Dendritic cell treated with granulocyte-macrophage colony-stimulating factor and Interleukin-4, amounts not matched to agents 40 ng/mL and 50 ng/mL, for 4 days (primary cell): ENCODE measurements at regions of chr1 and their contacts with region 1.

Region 1: DNA sequence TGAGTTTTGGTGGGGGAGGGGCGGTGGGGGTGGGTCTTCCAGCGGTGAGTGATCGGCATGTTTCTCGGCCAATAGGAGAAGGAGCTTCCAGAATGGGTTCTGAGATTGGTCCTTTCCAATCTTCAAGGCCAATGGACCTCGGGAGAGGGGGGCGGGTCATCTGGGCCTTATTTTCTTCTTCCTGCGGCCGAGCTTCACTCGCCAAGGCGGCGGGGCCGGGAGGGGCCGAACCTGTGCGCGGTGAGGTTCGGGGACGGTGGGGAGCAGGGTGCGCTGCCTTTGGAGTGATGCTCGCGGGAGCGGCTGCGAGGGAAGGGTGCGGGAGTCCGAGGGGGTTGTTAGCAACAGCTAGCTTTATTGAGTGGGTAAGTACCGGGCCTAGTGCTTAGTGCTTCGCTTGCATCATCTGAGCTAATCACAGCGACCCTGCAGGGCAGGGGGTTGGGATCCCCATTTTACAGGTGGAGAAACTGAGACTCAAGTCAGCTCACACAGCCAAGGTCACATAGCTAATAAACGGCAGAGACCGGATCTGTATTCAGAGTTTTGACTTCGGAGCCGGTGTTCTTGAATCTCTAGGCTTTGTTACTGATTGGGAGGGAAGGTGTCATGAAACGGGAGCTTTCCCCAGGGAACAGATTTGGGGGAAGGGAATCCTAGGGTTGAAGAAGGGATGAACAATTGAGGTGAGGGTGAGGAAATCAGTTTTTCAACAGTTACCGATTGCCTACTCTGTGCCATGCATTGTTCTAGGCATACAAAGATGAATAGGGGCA is 549 bp downstream of the KDM4A start:
- H3K4me3 Mint-ChIP-seq: peak overlapping the region; percentile 82
- H3K27ac Mint-ChIP-seq: peak overlapping the region; percentile 94
- H3K4me1 Mint-ChIP-seq: peaks cover 40% of the 10 kb centered on the region
- H3K27me3 Mint-ChIP-seq: no peaks in the 10 kb centered on the region

Region 2: GRCh38 chr1:43227143-43227764 is 423.2 kb before region 1 on chr1:
- intact Hi-C with region 1: loop called (anchors 10 kb)
- H3K4me3 Mint-ChIP-seq: no peak overlapping the region
- H3K27ac Mint-ChIP-seq: no peak overlapping the region
- H3K4me1 Mint-ChIP-seq: peaks cover 34% of the 10 kb centered on the region
- H3K27me3 Mint-ChIP-seq: peaks cover 5% of the 10 kb centered on the region

Region 3: DNA sequence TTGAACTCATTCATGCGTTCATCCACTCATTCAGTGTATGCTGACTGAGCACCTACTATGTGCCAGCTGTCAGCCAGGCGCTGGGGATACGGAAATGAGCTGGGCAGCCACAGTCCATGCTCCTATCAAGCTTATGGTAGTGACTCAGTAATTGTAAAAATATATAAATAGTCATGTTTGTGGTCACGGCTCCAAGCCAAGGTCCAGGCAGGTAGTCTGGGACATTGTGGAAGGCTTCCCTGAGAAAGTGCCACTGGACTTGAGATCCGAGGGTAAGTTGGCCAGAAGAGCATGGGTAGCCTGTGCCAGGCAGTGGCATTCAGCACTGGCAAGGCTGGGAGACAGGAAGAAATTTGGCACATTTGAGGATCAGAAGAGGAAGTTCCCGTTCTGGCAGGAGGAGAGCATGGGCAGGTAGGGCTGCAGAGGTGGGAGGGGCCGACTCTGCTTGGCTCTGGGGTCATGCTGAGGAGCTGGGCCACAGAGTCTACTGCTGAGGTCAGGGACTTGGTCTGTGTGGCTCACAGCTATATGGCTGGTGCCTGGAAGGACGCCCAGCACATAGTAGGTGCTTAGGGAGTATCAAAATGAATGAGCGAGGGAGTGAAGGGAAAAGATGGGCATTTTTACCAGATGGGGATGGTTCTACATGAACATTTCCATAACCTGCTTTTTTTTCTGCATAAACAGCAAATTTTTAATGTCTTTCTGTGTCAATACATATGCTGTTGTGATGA is 112.9 kb before region 1 on chr1:
- intact Hi-C with region 1: no loop called
- H3K4me3 Mint-ChIP-seq: no peak overlapping the region
- H3K27ac Mint-ChIP-seq: no peak overlapping the region
- H3K4me1 Mint-ChIP-seq: no peaks in the 10 kb centered on the region
- H3K27me3 Mint-ChIP-seq: peaks cover 19% of the 10 kb centered on the region

Region 4: GRCh38 chr1:43622471-43622870 is 28.0 kb before region 1 on chr1:
- intact Hi-C with region 1: no loop called
- H3K4me3 Mint-ChIP-seq: no peak overlapping the region
- H3K27ac Mint-ChIP-seq: no peak overlapping the region
- H3K4me1 Mint-ChIP-seq: no peaks in the 10 kb centered on the region
- H3K27me3 Mint-ChIP-seq: no peaks in the 10 kb centered on the region

Region 5: DNA sequence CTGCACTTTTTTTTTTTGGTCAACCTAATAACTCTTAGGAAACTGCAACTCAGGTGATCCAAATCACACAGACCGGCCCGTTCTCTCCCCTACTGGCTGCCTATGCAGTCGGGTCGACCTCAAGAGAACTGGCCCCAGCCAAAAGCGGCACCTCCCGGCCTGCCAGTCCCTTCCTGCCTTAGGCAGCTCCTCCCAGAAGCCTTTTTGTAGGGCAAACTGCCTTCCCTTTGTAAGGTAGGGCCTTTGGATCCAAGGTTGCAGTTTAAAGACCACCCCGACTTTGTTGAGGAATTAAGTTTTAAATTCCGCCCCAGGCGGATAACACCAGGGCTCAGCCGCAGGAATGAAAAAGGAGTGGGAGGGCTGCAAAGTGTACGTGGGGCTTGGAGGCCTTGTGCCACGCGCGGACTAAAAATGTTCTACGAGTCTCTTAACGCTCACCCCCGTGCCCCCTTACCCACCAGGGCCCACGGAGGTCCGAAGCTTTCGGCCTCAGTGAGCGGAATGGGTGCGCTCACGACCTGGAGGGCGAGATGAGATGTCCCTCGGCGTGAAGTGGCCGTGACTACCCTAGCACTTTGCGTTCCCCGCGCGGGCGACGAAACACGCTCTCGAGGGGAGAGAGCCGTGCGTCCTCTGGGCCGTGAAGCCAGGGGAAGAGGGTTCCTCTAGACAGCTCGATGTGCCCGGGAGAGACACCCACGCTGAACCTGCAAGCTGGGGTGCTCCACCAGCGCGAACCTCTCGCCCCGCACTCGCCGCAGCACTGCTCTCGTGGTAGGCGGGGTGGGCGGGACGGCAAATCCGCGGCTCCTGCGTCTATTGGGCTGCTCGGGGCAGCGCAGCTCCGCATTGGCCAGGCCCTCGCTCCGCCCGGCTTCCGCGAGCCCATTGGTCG is 56.3 kb after region 1 on chr1:
- intact Hi-C with region 1: loop called (anchors 2 kb)
- H3K4me3 Mint-ChIP-seq: peak overlapping the region; percentile 94
- H3K27ac Mint-ChIP-seq: peak overlapping the region; percentile 81
- H3K4me1 Mint-ChIP-seq: peaks cover 59% of the 10 kb centered on the region
- H3K27me3 Mint-ChIP-seq: no peaks in the 10 kb centered on the region